ENCODE measurements at regions of chr2 and their contacts with region 1.

Region 1: GRCh38 chr2:54106631-54107454 is 8.6 kb upstream of the ACYP2 start:
- DNase-seq: no peak
- ATAC-seq: peak; percentile 35
- H3K4me3 Mint-ChIP-seq: no peak overlapping the region
- H3K27ac Mint-ChIP-seq: peak overlapping the region; percentile 12
- H3K4me1 Mint-ChIP-seq: peaks cover 51% of the 10 kb centered on the region
- H3K27me3 Mint-ChIP-seq: no peaks in the 10 kb centered on the region
- CTCF ChIP-seq: peak; percentile 45

Region 2: GRCh38 chr2:53767405-53768241 is 339.2 kb before region 1 on chr2 and contains the start of gene CHAC2:
- CTCF ChIA-PET with region 1: no interaction called
- POLR2A ChIA-PET with region 1: interaction called, 5 read pairs
- intact Hi-C with region 1: loop called (anchors 5 kb)
- DNase-seq: peak; percentile 82
- ATAC-seq: peak; percentile 92
- H3K4me3 Mint-ChIP-seq: peak within 1 kb of the TSS; percentile 95
- H3K27ac Mint-ChIP-seq: peak within 1 kb of the TSS; percentile 99
- H3K4me1 Mint-ChIP-seq: peaks cover 21% of the 10 kb centered on the region
- H3K27me3 Mint-ChIP-seq: no peaks in the 10 kb centered on the region
- CTCF ChIP-seq: no peak
- total RNA-seq, gene CHAC2: 7.0 and 7.6 TPM in 2 replicates

Region 3: GRCh38 chr2:54092940-54093339 is 13.9 kb before region 1 on chr2:
- CTCF ChIA-PET with region 1: interaction called, 10 read pairs
- POLR2A ChIA-PET with region 1: interaction called, 7 read pairs
- intact Hi-C with region 1: loop called (anchors 1 kb)
- DNase-seq: no peak
- ATAC-seq: peak; percentile 68
- H3K4me3 Mint-ChIP-seq: peak overlapping the region; percentile 49
- H3K27ac Mint-ChIP-seq: peak overlapping the region; percentile 82
- H3K4me1 Mint-ChIP-seq: peaks cover 52% of the 10 kb centered on the region
- H3K27me3 Mint-ChIP-seq: no peaks in the 10 kb centered on the region
- CTCF ChIP-seq: no peak

Region 4: DNA sequence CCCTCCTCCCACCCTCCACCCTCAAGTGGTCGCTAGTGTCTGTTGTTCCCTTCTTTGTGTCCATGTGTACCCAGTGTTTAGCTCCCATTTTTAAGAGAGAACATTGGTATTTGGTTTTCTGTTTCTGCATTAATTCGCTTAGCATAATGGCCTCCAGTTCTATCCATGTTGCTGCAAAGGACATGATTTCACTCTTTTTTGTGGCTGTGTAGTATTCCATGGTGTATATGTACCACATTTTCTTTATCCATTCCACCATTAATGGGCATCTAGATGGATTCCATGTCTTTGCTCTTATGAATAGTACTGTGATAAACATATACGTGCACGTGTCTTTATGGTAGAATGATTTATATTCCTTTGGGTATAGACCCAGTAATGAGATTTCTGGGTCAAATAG is 106.2 kb after region 1 on chr2:
- CTCF ChIA-PET with region 1: no interaction called
- POLR2A ChIA-PET with region 1: no interaction called
- intact Hi-C with region 1: no loop called
- DNase-seq: no peak
- ATAC-seq: no peak
- H3K4me3 Mint-ChIP-seq: no peak overlapping the region
- H3K27ac Mint-ChIP-seq: no peak overlapping the region
- H3K4me1 Mint-ChIP-seq: no peaks in the 10 kb centered on the region
- H3K27me3 Mint-ChIP-seq: no peaks in the 10 kb centered on the region
- CTCF ChIP-seq: no peak

Region 5: GRCh38 chr2:54262015-54262765 is 155.3 kb after region 1 on chr2:
- CTCF ChIA-PET with region 1: no interaction called
- POLR2A ChIA-PET with region 1: no interaction called
- intact Hi-C with region 1: no loop called
- DNase-seq: no peak
- ATAC-seq: no peak
- H3K4me3 Mint-ChIP-seq: no peak overlapping the region
- H3K27ac Mint-ChIP-seq: no peak overlapping the region
- H3K4me1 Mint-ChIP-seq: no peaks in the 10 kb centered on the region
- H3K27me3 Mint-ChIP-seq: no peaks in the 10 kb centered on the region
- CTCF ChIP-seq: no peak

Region 6: DNA sequence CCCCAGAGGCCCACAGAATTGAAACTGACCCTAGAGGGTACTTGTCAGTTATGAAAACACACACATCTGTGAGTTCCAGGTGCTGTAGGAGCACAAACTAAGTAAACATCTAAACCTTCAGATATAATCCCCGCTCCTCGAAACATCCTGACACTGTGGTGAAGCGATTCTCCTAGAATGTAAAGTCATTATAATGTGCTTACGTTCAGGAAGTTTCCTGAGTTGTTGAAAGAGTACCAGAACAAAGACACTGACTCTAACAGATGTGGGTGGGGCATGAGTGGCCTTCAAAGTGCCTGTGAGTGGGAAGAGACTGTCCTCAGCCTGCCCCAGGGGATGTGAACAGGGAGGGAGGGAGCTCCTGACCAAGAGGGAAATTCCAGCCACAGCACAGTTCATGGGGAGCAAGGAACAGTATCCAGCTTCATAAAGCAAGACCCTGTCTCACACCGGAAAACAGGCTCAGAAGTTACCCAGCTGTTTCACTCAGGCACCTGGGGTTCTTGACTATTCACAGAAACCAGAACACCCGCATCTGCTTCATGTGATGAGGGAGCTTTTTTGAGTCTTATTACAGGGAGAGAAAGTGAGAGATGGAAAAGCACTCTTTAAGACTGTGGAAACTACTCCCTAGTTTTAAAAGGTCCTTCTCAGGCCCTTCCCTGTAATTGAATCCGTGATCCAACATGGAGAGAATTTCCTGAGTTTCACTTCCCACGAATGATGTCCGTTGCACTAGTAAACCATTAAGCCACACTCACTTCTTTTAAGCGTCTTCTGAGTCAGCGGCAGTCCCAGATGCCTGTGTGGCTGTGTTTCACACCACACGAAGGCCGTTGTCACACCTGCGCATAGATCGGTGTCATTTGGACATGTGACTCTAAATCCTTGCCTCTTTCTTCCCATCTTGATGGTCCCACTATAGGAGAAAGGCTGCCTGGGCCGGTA is 528.0 kb after region 1 on chr2:
- CTCF ChIA-PET with region 1: interaction called, 11 read pairs
- POLR2A ChIA-PET with region 1: no interaction called
- intact Hi-C with region 1: loop called (anchors 1 kb)
- DNase-seq: peak; percentile 42
- ATAC-seq: peak; percentile 73
- H3K4me3 Mint-ChIP-seq: peak overlapping the region; percentile 47
- H3K27ac Mint-ChIP-seq: peak overlapping the region; percentile 97
- H3K4me1 Mint-ChIP-seq: peaks cover 59% of the 10 kb centered on the region
- H3K27me3 Mint-ChIP-seq: no peaks in the 10 kb centered on the region
- CTCF ChIP-seq: no peak

Region 7: DNA sequence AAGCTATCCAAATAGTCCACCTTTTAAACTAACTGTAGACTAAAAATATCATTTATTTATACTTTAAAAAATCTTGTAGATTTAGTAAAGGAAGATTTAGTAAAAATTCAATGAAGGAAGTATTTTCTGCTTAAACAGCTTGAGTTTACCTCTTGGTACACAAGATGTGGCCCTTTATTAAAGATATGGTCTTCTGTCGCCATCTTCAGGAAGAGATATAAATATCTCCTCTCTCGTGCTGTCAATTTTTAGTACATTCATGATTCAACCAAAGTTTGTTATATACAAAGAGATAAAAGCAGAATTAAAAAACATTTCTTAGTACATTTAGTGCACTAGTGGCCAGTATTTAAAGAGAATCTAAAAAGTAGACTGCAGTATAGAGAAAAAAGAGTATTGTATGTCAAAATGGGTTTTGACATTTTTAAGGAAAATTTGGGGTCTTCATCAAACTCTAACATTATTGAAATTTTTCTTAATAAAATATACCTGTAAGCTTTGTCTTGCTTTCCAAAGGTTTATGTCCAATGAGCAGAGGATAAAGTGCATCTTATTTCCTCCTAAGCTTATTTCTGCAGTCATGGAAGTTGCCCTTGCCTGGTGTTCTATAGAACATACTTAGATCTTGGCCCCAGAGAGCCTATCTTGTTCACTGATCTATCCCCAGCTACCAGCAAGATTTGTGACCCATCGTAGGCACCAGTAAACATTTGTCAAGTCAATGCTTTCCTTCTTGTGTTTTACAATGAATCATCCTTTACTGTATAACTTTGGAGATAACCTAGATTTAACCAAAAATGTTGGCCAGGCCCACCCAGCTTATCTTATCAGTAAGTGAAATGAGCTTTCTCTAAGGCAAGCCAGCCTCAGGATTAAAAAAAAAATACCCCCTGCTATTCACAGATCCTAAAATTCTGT is 598.1 kb after region 1 on chr2:
- CTCF ChIA-PET with region 1: interaction called, 69 read pairs
- POLR2A ChIA-PET with region 1: interaction called, 4 read pairs
- intact Hi-C with region 1: loop called (anchors 1 kb)
- DNase-seq: no peak
- ATAC-seq: peak; percentile 51
- H3K4me3 Mint-ChIP-seq: no peak overlapping the region
- H3K27ac Mint-ChIP-seq: no peak overlapping the region
- H3K4me1 Mint-ChIP-seq: peaks cover 8% of the 10 kb centered on the region
- H3K27me3 Mint-ChIP-seq: peaks cover 8% of the 10 kb centered on the region
- CTCF ChIP-seq: no peak

Region 8: GRCh38 chr2:55168221-55169154 is 1061.6 kb after region 1 on chr2:
- CTCF ChIA-PET with region 1: interaction called, 15 read pairs
- POLR2A ChIA-PET with region 1: no interaction called
- intact Hi-C with region 1: loop called (anchors 2 kb)
- DNase-seq: no peak
- ATAC-seq: peak; percentile 45
- H3K4me3 Mint-ChIP-seq: no peak overlapping the region
- H3K27ac Mint-ChIP-seq: no peak overlapping the region
- H3K4me1 Mint-ChIP-seq: no peaks in the 10 kb centered on the region
- H3K27me3 Mint-ChIP-seq: no peaks in the 10 kb centered on the region
- CTCF ChIP-seq: no peak

Region 9: DNA sequence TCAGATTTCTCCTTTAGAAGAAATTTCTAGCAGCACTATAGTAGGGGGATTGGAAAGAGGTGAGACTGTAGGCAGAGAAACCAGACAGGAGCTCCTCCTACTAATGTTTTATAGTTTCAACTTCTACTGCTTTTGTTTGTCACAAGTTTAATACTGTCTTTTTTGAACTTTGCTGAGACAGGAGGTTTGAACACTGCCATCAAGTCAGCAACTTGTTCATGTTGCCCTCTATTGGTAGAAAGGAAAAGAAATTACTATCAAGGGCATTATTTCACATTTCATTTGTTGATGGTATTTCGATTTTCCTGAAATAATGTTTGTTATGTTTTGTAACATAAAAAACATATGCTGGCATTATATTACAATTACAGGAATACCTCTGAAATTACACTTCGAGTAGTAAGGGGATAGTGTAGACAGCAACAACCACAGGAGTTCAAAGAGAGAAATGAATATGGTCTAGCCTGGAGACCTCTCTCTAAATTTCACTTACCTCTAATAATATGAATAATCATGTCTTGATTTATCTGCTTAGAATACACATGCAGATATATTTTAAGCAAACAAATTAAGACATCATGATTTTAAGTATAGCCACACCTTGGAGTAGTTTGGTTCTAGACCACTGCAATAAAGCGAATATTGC is 1325.3 kb after region 1 on chr2:
- CTCF ChIA-PET with region 1: no interaction called
- POLR2A ChIA-PET with region 1: no interaction called
- intact Hi-C with region 1: loop called (anchors 1 kb)
- DNase-seq: no peak
- ATAC-seq: no peak
- H3K4me3 Mint-ChIP-seq: no peak overlapping the region
- H3K27ac Mint-ChIP-seq: no peak overlapping the region
- H3K4me1 Mint-ChIP-seq: no peaks in the 10 kb centered on the region
- H3K27me3 Mint-ChIP-seq: no peaks in the 10 kb centered on the region
- CTCF ChIP-seq: no peak

Measured in activated B cell treated with CpG ODN at 0.5 μM for 24 hours (primary cell).